ENCODE measurements at regions of chr11 and their contacts with region 1.

Region 1: DNA sequence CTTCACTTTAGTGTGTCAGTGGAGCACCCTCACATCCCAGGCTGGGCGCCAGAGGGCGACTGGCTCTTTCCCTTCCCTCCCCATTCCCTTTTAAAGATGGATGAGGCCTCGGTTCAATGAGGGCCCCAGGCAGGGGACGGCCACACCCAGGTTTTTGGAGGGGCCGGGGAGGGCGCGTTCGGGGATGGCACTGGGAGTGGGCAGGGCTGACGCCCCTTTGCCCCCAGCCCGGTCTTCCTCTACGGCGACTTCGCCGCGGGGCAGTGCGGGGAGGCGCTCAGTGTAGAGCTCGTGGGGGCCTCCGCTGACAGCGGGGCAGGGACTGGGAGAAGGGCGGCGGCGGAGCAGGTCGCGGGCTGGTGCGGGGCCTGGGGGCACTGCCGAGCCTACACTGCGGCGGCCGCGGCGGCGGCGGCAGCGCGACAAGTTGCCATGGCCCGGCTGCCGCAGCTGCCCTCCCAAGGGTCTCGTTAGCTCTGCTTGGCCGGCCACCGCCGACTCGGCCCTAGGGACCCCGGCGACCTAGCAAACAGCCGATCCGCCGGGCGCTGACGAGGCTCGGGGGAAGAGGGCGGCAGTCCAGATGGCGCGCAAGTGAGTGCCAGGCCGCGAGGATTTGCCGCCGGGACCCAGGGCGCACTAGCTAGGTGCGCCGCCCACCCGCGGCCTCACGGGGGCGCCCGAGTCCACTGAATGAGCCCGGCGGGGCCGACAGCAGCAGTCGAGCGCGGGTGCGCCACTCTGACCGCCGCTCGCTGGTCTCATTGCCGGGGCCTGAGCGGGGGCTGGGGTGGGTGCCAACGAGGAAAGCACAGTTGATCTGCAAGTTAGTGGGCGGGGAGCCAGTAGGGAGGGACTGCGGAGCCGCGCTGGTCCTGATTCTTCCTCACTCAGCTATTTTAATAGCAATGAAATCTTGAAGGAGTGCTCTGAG is 92.7 kb downstream of the RRM1 start:
- DNase-seq: peak; percentile 71 to 81 (median 72)
- H3K4me3 ChIP-seq: peak overlapping the region; percentile 29
- H3K4me3 Mint-ChIP-seq: peak overlapping the region; percentile 34 to 91 (median 77)
- H3K27ac ChIP-seq: no peak overlapping the region
- H3K27ac Mint-ChIP-seq: peak overlapping the region in 2 of 8 donors; percentile 27 to 57
- H3K4me1 ChIP-seq: no peaks in the 10 kb centered on the region
- H3K4me1 Mint-ChIP-seq: peaks cover 0 to 4% (median 2%) of the 10 kb centered on the region in 3 donors
- H3K27me3 ChIP-seq: no peaks in the 10 kb centered on the region
- H3K27me3 Mint-ChIP-seq: peaks cover 6 to 10% of the 10 kb centered on the region in 2 donors

Region 2: DNA sequence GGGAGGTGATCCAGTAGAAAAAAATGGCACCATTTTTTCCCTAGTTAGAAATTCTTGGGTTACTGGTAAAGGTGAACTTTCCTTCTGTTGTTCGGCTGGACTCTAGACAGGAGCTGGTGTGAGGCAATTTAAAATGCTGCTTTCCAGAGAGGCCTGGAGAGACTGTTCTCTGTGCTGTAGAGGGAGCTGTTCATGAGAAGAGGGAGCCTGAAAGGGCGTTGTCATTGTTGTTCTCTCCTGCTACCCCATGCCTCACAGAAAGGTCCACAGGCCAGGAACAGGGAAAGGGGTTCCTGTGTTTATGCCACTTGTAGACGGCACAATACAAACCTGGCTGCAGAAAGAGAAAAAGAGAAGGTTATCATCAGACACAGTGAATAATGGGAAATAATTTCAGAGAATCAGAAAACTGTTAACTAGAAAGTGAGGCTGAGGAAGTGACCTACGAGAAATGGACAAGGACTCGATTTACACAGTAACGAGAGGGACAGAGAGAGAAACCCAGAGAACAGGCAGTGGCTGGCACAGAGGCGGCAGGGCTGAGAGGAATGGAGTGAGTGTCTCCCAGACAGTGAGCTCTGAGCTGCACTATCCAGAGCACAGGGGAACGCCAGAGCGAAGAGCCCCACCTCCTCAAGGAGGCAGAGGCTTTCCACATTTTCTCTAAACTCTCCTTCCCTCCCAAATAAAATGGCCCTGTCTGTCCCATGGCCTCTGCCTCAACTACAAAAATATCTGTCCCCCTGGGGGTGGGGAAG is 16.5 kb after region 1 on chr11:
- CTCF ChIA-PET with region 1: interaction called, 11 read pairs
- POLR2A ChIA-PET with region 1: no interaction called
- DNase-seq: no peak
- H3K4me3 ChIP-seq: no peak overlapping the region
- H3K4me3 Mint-ChIP-seq: peak overlapping the region in 1 of 7 donors; percentile 68
- H3K27ac ChIP-seq: no peak overlapping the region
- H3K27ac Mint-ChIP-seq: no peak overlapping the region
- H3K4me1 ChIP-seq: no peaks in the 10 kb centered on the region
- H3K4me1 Mint-ChIP-seq: no peaks in the 10 kb centered on the region
- H3K27me3 ChIP-seq: no peaks in the 10 kb centered on the region
- H3K27me3 Mint-ChIP-seq: peaks cover 11 to 45% of the 10 kb centered on the region in 2 donors

Region 3: GRCh38 chr11:4493480-4493818 is 306.1 kb after region 1 on chr11:
- CTCF ChIA-PET with region 1: interaction called, 62 read pairs
- POLR2A ChIA-PET with region 1: no interaction called
- DNase-seq: no peak
- H3K4me3 ChIP-seq: no peak overlapping the region
- H3K4me3 Mint-ChIP-seq: peak overlapping the region in 1 of 7 donors; percentile 42
- H3K27ac ChIP-seq: no peak overlapping the region
- H3K27ac Mint-ChIP-seq: no peak overlapping the region
- H3K4me1 ChIP-seq: no peaks in the 10 kb centered on the region
- H3K4me1 Mint-ChIP-seq: peaks cover 2 to 6% (median 5%) of the 10 kb centered on the region in 3 donors
- H3K27me3 ChIP-seq: peaks cover 6% of the 10 kb centered on the region
- H3K27me3 Mint-ChIP-seq: peaks cover 5 to 38% of the 10 kb centered on the region in 2 donors

Region 4: GRCh38 chr11:4539603-4540219 is 352.4 kb after region 1 on chr11:
- CTCF ChIA-PET with region 1: interaction called, 83 read pairs
- POLR2A ChIA-PET with region 1: no interaction called
- DNase-seq: peak in 4 of 5 donors; percentile 6 to 23 (median 18)
- H3K4me3 ChIP-seq: no peak overlapping the region
- H3K4me3 Mint-ChIP-seq: no peak overlapping the region
- H3K27ac ChIP-seq: no peak overlapping the region
- H3K27ac Mint-ChIP-seq: no peak overlapping the region
- H3K4me1 ChIP-seq: no peaks in the 10 kb centered on the region
- H3K4me1 Mint-ChIP-seq: no peaks in the 10 kb centered on the region
- H3K27me3 ChIP-seq: no peaks in the 10 kb centered on the region
- H3K27me3 Mint-ChIP-seq: peaks cover 10 to 19% of the 10 kb centered on the region in 2 donors

Region 5: DNA sequence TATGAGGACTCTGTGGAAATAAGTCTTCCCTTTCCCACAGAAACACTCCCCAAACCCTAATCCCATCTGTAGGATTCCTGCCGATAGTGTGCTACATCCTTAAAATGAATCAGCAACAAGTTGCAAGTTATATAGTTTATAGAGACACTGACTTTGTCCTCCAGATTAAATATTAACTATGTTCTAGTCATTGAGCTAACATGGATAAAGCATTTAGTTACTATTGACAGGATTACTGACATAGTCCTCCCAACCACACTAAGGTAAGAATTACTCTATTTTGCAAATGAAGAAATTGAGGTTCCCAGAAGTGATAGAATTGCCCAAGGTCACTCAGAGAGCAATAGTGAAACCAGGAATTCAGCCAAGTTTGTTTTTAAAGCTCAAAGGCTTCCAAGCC is 359.6 kb after region 1 on chr11:
- CTCF ChIA-PET with region 1: interaction called, 83 read pairs
- POLR2A ChIA-PET with region 1: no interaction called
- DNase-seq: no peak
- H3K4me3 ChIP-seq: no peak overlapping the region
- H3K4me3 Mint-ChIP-seq: no peak overlapping the region
- H3K27ac ChIP-seq: no peak overlapping the region
- H3K27ac Mint-ChIP-seq: no peak overlapping the region
- H3K4me1 ChIP-seq: no peaks in the 10 kb centered on the region
- H3K4me1 Mint-ChIP-seq: no peaks in the 10 kb centered on the region
- H3K27me3 ChIP-seq: no peaks in the 10 kb centered on the region
- H3K27me3 Mint-ChIP-seq: peaks cover 12 to 24% of the 10 kb centered on the region in 2 donors

Measured in CD8-positive, alpha-beta memory T cell (primary cell).